Panc1 (cell line): ENCODE measurements at regions of chr17 and their contacts with region 1.

Region 1: DNA sequence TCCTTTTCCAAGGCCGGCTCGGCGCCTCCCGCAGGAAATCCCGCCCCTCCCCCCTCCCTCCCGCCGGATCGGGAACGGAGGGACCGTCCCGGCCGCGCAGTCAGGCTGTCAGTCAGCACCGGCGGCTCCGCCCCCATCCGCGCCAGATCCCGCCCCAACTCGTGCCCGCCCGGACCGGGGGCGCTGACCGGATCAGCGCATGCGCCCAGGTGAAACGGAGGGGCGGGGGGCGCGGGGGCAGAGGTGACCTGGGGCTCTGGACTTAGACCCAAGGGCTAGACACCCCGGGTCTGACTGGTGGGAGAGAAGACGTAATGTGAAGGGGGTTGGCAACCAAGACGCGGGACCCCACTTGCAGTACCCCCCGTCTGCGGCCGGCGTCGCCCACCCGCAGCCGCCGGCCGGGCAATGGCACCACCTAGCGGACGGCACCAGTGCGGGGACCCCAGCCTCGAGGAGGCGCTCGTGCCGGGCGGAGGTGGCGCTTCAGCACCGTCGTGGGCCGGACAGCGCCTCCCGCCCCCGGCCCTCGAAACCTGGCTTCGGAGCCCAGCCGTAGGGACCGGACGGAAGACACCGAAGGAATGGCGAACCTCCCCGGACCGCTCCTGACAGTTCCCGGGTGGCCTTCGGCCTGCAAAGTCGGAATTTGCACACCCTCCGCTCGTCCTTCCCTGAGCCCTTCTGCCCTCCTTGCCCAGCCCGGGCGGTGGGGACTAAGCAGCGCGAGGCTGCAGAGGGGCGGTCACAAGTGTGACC is at the start of gene CASKIN2:
- DNase-seq: peak; percentile 41
- ATAC-seq: peak; percentile 84
- H3K4me3 ChIP-seq: peak within 1 kb of the TSS; percentile 72 to 82
- H3K27ac ChIP-seq: peak within 1 kb of the TSS; percentile 80
- H3K4me1 ChIP-seq: peaks cover 38% of the 10 kb centered on the region
- H3K27me3 ChIP-seq: no peaks in the 10 kb centered on the region
- CTCF ChIP-seq: peak; percentile 100
- total RNA-seq, gene CASKIN2: 40.0 TPM

Region 2: GRCh38 chr17:75544250-75544649 is 28.6 kb after region 1 on chr17:
- CTCF ChIA-PET with region 1: no interaction called
- POLR2A ChIA-PET with region 1: interaction called, 10 read pairs
- in situ Hi-C with region 1: no loop called
- intact Hi-C with region 1: no loop called
- DNase-seq: no peak
- ATAC-seq: no peak
- H3K4me3 ChIP-seq: no peak overlapping the region
- H3K27ac ChIP-seq: 0 out of 2 replicates have a peak overlapping the region, but pooled peaks have one; percentile 6
- H3K4me1 ChIP-seq: peaks cover 29% of the 10 kb centered on the region
- H3K27me3 ChIP-seq: no peaks in the 10 kb centered on the region
- CTCF ChIP-seq: no peak